Endothelial cell of umbilical vein (primary cell): ENCODE measurements at regions of chr2 and their contacts with region 1.

Region 1: GRCh38 chr2:216287251-216287650 is 85.0 kb downstream of the MARCHF4 start:
- DNase-seq: no peak
- H3K4me3 ChIP-seq: no peak overlapping the region
- H3K27ac ChIP-seq: no peak overlapping the region
- H3K4me1 ChIP-seq: peaks cover 9% of the 10 kb centered on the region
- H3K27me3 ChIP-seq: no peaks in the 10 kb centered on the region
- CTCF ChIP-seq: no peak
- POLR2A ChIP-seq: no peak

Region 2: DNA sequence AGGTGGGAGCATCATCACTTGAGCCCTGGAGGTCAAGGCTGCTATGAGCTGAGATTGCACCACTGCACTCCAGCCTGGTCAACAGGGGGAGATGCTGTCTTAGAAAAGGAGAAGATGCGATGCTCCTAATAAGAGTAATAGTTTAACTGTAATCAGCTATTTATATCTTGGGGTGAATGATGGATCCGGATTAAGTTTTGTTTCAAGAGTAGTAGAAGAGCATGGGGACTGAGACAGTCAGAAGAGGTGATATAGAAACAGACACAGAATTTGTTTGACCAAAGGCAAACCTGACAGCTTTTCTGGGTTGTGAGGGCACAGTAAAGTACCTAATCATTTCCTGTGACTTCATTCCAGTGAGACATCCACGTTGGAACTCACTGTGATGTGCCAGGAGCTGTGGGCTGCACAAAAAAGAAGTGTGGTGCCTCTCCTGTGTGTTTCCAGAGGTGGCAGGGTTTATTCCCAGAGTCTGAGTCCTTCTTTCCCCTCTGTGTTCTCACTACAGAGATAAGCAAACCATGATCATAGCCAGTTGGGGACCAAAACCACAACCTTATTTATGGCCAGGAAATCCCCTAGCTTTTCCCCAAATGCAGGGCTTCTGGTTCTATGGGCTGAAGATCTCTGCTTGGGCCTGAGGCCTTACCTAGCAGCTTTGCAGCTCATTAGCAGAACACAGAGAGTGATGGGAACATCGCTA is 64.5 kb before region 1 on chr2:
- CTCF ChIA-PET with region 1: interaction called, 4 read pairs
- POLR2A ChIA-PET with region 1: no interaction called
- dilution Hi-C with region 1: no loop called
- intact Hi-C with region 1: loop called (anchors 5 kb)
- DNase-seq: peak; percentile 32
- H3K4me3 ChIP-seq: no peak overlapping the region
- H3K27ac ChIP-seq: no peak overlapping the region
- H3K4me1 ChIP-seq: peaks cover 30% of the 10 kb centered on the region
- H3K27me3 ChIP-seq: no peaks in the 10 kb centered on the region
- CTCF ChIP-seq: peak; percentile 9 to 26
- POLR2A ChIP-seq: no peak